SK-N-SH (cell line): ENCODE measurements at regions of chr22 and their contacts with region 1.

Region 1: GRCh38 chr22:35604621-35605368 is 12.3 kb downstream of the MB start:
- DNase-seq: peak; percentile 73
- H3K4me3 ChIP-seq: no peak overlapping the region
- H3K27ac ChIP-seq: peak overlapping the region in 1 of 2 experiments; percentile 97; a peak in 2 of 4 replicates
- H3K4me1 ChIP-seq: peaks cover 0 to 52% of the 10 kb centered on the region in 2 experiments; a peak in 2 of 4 replicates
- H3K27me3 ChIP-seq: no peaks in the 10 kb centered on the region; the same call in 1 of the 2 replicates
- CTCF ChIP-seq: no peak
- EP300 ChIP-seq: peak in 1 of 2 experiments; percentile 46; a peak in 2 of 4 replicates
- RAD21 ChIP-seq: no peak

Region 2: DNA sequence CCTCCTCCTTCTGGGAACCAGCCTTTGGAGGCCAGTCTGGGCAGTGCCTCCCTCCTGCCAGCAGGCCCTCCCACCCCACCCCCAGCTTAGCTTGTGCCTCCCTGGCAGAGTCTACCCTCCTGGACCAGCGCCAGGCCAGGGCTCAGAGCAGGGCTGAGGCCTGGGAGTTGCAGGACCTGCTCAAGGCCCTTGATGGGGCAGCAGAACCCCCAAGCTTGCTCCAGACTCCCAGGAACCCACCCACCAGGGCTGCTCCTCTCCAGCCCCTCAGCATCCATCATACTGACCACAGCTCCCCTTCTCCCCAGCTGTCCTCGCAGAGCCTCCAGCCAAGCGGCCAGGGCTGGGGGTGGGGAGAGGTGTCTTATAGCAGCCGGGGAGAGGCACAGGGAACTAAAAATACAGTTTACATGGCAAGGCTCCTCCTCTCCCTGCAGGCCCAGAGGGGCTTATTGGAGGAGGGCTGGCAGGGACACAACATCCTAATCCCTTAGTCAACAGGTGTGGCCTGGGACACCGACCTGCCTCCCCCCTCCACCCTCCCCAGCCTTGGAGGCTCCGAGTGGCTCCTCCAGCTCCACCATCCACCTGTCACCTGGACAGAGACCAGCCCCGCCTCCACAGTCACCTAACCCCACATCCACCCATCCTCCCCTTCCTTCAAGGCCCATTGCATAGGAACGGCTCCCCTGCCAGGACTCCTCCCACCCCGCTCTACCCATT is 17.6 kb after region 1 on chr22:
- CTCF ChIA-PET with region 1: interaction called, 14 read pairs
- POLR2A ChIA-PET with region 1: interaction called, 6 read pairs
- DNase-seq: peak; percentile 67
- H3K4me3 ChIP-seq: no peak overlapping the region
- H3K27ac ChIP-seq: peak overlapping the region in 1 of 2 experiments; percentile 81; a peak in 2 of 4 replicates
- H3K4me1 ChIP-seq: peaks cover 0 to 41% of the 10 kb centered on the region in 2 experiments; a peak in 2 of 4 replicates
- H3K27me3 ChIP-seq: no peaks in the 10 kb centered on the region
- CTCF ChIP-seq: no peak
- EP300 ChIP-seq: no peak
- RAD21 ChIP-seq: no peak